Dorsolateral prefrontal cortex (tissue), 120 donors: ENCODE measurements at regions of chr6 and their contacts with region 1.

Region 1: GRCh38 chr6:36678518-36679027 is at the start of gene CDKN1A:
- DNase-seq: peak; percentile 56 to 92 (median 81)
- H3K4me3 ChIP-seq: peak within 1 kb of the TSS; percentile 48 to 91 (median 78)
- H3K27ac ChIP-seq: peak within 1 kb of the TSS; percentile 52 to 98 (median 94)
- H3K27me3 ChIP-seq: no peaks in the 10 kb centered on the region
- CTCF ChIP-seq: peak in 26 of 56 donors; percentile 4 to 52 (median 23)
- total RNA-seq, gene CDKN1A: 8.3 to 193 (median 29.3) TPM

Region 2: DNA sequence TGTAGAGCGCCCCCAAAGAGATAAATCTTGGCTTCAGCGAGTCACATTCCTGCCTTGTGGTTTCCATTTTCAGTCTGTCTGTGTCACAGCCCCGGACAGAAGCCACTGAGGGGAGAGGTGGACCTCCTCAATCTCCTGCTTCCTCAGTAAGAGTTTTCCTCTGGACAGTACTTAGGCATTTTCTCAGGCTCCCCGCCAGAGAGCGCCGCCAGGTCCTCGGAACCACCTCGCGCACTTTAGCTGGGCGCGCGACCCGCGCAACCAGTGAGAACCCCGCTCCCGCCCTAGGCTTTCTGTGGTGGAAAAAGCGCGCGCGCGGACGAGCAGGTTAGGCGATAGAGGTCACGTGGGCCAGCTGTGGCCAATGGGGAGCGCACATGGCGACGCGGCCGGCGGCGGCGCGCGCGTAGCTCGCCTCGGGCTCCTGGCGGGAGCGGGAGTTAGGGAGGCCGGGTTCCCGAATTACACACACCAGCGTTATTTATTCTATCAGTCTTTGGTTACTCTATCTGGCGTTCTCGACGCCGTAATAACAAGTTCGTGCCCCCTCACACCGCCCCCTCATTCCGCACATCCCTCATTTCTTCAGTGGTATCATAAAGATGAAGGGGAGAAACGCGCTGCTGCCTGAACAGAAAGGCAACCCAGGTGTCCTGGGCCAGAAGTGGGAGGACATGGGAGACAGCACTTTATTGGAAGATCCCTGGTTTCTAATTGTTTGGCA is 255.3 kb before region 1 on chr6:
- intact Hi-C with region 1: loop called (anchors 1 to 2 kb)
- DNase-seq: peak; percentile 96 to 99 (median 97)
- H3K4me3 ChIP-seq: peak overlapping the region; percentile 45 to 81 (median 67)
- H3K27ac ChIP-seq: peak overlapping the region; percentile 27 to 93 (median 82)
- H3K27me3 ChIP-seq: no peaks in the 10 kb centered on the region
- CTCF ChIP-seq: peak; percentile 38 to 84 (median 70)

Region 3: GRCh38 chr6:36546920-36547645 is 131.5 kb before region 1 on chr6 and contains the start of gene STK38:
- intact Hi-C with region 1: loop called in 1 of 2 experiments (anchors 5 kb)
- DNase-seq: peak; percentile 72 to 91 (median 84)
- H3K4me3 ChIP-seq: peak within 1 kb of the TSS; percentile 58 to 100 (median 96)
- H3K27ac ChIP-seq: peak within 1 kb of the TSS; percentile 88 to 100 (median 97)
- H3K27me3 ChIP-seq: no peaks in the 10 kb centered on the region
- CTCF ChIP-seq: peak in 39 of 56 donors; percentile 3 to 63 (median 37)
- total RNA-seq, gene STK38: 6.3 to 23.4 (median 13.6) TPM

Region 4: GRCh38 chr6:36666726-36667591 is 11.6 kb before region 1 on chr6:
- intact Hi-C with region 1: loop called in 1 of 2 experiments (anchors 1 kb)
- DNase-seq: peak in 9 of 10 donors; percentile 38 to 80 (median 74)
- H3K4me3 ChIP-seq: peak overlapping the region in 3 of 59 donors; percentile 5 to 31 (median 15)
- H3K27ac ChIP-seq: peak overlapping the region in 47 of 59 donors; percentile 4 to 77 (median 55)
- H3K27me3 ChIP-seq: no peaks in the 10 kb centered on the region
- CTCF ChIP-seq: peak in 2 of 56 donors; percentile 20